ENCODE measurements at regions of chr17 and their contacts with region 1.

Region 1: DNA sequence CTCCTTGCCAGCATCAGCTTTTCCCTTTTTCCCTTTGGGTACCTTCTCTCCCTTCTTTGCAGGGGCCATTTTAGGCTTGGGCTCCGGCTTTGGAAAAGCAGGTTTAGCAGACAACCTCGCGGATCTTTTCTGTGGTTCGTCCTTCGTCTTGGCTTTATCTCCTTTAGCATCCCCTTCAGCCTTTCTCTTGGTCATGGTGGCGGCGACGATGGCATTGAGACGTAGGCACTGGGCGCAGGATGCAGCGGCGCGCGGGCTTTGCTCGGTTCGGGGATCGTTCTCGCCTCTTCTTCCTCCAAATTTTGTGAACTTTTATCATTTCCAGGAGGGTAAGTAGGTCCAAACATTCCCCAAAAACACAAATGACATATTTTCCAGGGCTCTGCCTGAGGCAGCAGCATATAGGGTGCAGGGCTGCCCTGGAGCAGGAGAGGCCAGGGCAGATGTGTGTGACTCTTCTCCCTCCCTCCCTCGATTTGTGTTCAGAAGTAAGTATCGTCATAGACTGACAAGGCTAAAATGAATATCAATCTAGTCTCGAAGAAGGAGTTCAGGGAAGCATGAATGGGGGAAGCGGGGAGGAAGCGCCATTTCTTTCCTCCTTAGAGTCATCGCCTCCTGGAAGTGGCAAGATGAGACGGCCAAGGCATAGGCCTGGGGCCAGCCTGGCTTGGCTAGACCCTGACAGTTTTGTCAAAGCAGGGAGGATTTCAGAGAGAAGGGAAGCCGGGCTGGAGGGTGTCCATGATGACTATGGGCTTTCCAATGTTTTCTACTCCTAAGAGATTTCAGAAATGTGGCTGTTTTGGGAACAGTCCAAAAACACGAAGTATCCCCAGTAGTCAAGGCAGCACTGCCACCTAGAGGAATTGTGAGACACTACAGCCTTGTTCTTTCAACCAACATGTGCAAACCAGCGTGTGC is 13.2 kb downstream of the CHCT1 start:
- H3K4me3 ChIP-seq: no peak overlapping the region
- H3K27ac ChIP-seq: no peak overlapping the region
- H3K4me1 ChIP-seq: no peaks in the 10 kb centered on the region
- CTCF ChIP-seq: peak; percentile 89

Region 2: DNA sequence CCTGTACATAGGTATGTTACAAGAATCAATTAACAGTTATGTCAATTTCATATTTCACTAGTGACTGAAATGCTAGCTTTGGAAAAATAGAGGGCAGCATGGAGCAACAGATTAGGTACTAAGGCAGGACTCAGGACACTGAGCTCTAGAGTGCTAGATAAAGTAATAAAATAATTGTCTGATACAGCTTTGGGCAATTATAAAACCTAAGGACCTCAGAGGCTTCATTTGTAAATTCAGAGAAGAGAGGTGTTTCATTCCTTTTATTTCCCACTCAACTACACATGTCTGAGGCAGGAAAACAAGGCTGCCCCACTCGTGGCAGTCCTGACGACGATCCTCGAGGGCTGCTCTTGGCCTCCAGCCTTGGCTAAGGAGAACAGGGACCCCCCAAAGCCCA is 204.3 kb before region 1 on chr17:
- CTCF ChIA-PET with region 1: interaction called, 13 read pairs
- POLR2A ChIA-PET with region 1: no interaction called
- H3K4me3 ChIP-seq: no peak overlapping the region
- H3K27ac ChIP-seq: no peak overlapping the region
- H3K4me1 ChIP-seq: peaks cover 3% of the 10 kb centered on the region; the same call in 1 of the 2 replicates
- CTCF ChIP-seq: no peak

Region 3: DNA sequence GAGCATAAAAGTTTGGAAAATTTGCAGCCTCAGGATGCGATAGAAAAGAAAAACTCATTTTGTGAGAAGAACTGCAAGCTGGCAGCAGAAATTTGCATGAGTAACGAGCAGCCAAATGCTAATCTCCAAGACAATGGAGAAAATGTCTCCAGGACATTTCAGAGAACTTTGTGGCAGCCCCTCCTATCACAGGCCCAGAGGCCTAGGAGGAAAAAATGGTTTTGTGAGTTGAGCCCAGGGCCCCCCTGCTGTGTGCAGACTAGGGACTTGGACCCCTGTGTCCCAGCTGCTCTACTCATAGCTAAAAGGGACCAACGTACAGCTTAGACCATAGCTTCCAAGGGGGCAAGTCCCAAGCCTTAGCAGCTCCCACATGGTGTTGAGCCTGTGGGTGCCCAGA is 56.3 kb after region 1 on chr17:
- CTCF ChIA-PET with region 1: no interaction called
- POLR2A ChIA-PET with region 1: no interaction called
- H3K4me3 ChIP-seq: no peak overlapping the region
- H3K27ac ChIP-seq: no peak overlapping the region
- H3K4me1 ChIP-seq: no peaks in the 10 kb centered on the region
- CTCF ChIP-seq: no peak